ENCODE measurements at regions of chr17 and their contacts with region 1.

Region 1: GRCh38 chr17:3845621-3846441 is at the start of gene NCBP3:
- DNase-seq: peak; percentile 96
- ATAC-seq: peak; percentile 97
- H3K4me3 ChIP-seq: peak within 1 kb of the TSS; percentile 54 to 96 (median 90)
- H3K4me3 Mint-ChIP-seq: peak within 1 kb of the TSS; percentile 92
- H3K27ac ChIP-seq: peak within 1 kb of the TSS; percentile 72 to 94
- H3K27ac Mint-ChIP-seq: peak within 1 kb of the TSS; percentile 86
- H3K4me1 ChIP-seq: peaks cover 10 to 20% of the 10 kb centered on the region in 2 donors
- H3K4me1 Mint-ChIP-seq: peaks cover 23% of the 10 kb centered on the region
- H3K27me3 ChIP-seq: no peaks in the 10 kb centered on the region
- H3K27me3 Mint-ChIP-seq: no peaks in the 10 kb centered on the region
- CTCF ChIP-seq: peak; percentile 90
- total RNA-seq, gene NCBP3: 70.7 and 71.7 TPM in 2 replicates

Region 2: GRCh38 chr17:3602499-3602898 is 243.3 kb before region 1 on chr17:
- CTCF ChIA-PET with region 1: interaction called, 10 read pairs
- POLR2A ChIA-PET with region 1: no interaction called
- intact Hi-C with region 1: no loop called
- DNase-seq: peak; percentile 58
- ATAC-seq: peak; percentile 60
- H3K4me3 ChIP-seq: no peak overlapping the region
- H3K4me3 Mint-ChIP-seq: no peak overlapping the region
- H3K27ac ChIP-seq: no peak overlapping the region
- H3K27ac Mint-ChIP-seq: no peak overlapping the region
- H3K4me1 ChIP-seq: no peaks in the 10 kb centered on the region
- H3K4me1 Mint-ChIP-seq: peaks cover 2% of the 10 kb centered on the region
- H3K27me3 ChIP-seq: no peaks in the 10 kb centered on the region
- H3K27me3 Mint-ChIP-seq: no peaks in the 10 kb centered on the region
- CTCF ChIP-seq: peak; percentile 43

Region 3: DNA sequence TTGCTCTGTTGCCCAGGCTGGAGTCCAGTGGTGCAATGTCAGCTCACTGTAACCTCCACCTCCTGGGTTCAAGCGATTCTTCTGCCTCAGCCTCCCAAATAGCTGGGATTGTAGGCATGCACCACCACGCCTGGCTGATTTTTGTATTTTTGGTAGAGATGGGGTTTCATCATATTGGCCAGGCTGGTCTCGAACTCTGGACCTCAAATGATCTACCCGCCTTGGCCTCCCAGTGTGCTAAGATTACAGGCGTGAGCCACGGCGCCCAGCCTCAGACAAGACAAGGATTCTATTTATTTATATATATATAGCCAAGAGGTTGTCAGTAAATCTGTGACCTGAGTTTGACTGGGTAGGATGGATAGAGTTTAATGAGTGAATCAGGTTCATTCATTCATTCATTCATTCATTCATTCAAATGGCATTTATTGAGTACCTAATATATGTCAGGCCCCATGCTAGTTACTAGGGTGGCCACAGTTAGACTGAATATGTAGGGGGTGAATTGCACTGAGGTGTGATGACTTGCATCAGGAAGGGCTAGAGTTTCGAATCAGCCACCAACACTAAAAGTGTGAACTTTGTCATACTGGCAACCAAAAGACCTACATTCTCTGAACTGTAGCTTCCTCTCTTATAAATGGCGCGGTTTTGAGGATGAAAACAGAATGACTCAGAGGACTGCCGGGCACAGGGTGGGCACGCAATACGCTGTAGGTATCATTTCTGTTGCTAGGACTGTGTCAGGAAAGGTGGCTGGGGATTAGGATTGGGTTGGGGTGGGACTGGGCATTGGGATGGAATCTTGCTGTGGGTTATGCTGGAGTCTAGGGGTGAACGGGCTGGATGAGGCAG is 82.7 kb before region 1 on chr17:
- CTCF ChIA-PET with region 1: interaction called, 13 read pairs
- POLR2A ChIA-PET with region 1: no interaction called
- intact Hi-C with region 1: no loop called
- DNase-seq: no peak
- ATAC-seq: peak; percentile 43
- H3K4me3 ChIP-seq: no peak overlapping the region
- H3K4me3 Mint-ChIP-seq: peak overlapping the region; percentile 59
- H3K27ac ChIP-seq: no peak overlapping the region
- H3K27ac Mint-ChIP-seq: peak overlapping the region; percentile 88
- H3K4me1 ChIP-seq: peaks cover 10 to 22% of the 10 kb centered on the region in 2 donors
- H3K4me1 Mint-ChIP-seq: peaks cover 20% of the 10 kb centered on the region
- H3K27me3 ChIP-seq: no peaks in the 10 kb centered on the region
- H3K27me3 Mint-ChIP-seq: no peaks in the 10 kb centered on the region
- CTCF ChIP-seq: no peak

Region 4: GRCh38 chr17:3865176-3865575 is 19.3 kb after region 1 on chr17:
- CTCF ChIA-PET with region 1: interaction called, 29 read pairs
- POLR2A ChIA-PET with region 1: interaction called, 3 read pairs
- intact Hi-C with region 1: no loop called
- DNase-seq: no peak
- ATAC-seq: no peak
- H3K4me3 ChIP-seq: no peak overlapping the region
- H3K4me3 Mint-ChIP-seq: no peak overlapping the region
- H3K27ac ChIP-seq: no peak overlapping the region
- H3K27ac Mint-ChIP-seq: no peak overlapping the region
- H3K4me1 ChIP-seq: no peaks in the 10 kb centered on the region
- H3K4me1 Mint-ChIP-seq: no peaks in the 10 kb centered on the region
- H3K27me3 ChIP-seq: no peaks in the 10 kb centered on the region
- H3K27me3 Mint-ChIP-seq: no peaks in the 10 kb centered on the region
- CTCF ChIP-seq: no peak

Region 5: DNA sequence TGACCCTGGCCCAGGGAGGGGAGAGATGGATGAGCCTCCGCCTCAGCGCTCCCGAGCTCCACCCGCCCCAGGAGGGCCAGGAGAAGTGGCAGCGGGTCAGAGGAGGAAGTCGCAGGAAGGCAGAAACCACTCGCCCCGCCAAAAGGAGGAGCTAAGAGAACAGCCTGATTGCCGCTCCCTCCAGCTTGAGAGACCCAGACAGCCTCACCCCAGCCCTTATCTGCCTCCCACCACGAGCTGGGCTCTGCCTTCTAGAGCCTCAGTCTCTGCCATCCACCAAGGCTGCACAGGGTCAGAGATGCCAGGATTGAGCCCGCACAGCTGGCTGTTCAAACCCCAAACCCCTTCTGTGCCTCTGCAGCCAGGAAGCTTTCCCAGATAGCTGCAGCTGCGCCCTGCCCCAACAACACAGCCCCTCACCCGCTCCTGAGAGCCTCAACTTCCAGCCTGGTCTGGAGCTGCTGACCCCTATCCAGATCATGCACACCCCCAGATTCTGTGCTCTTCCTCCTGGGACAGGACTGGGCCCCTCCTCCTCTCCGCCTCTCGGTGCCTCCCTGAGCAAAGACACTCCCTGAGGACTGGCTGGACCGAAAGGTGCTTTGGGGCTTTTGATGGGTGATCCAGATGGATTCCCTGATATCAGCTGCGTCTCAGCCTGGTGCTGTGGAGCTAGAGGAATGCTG is 119.4 kb after region 1 on chr17:
- CTCF ChIA-PET with region 1: interaction called, 10 read pairs
- POLR2A ChIA-PET with region 1: interaction called, 9 read pairs
- intact Hi-C with region 1: loop called (anchors 1 kb)
- DNase-seq: peak; percentile 85
- ATAC-seq: peak; percentile 35
- H3K4me3 ChIP-seq: peak overlapping the region; percentile 13 to 98 (median 86)
- H3K4me3 Mint-ChIP-seq: peak overlapping the region; percentile 94
- H3K27ac ChIP-seq: peak overlapping the region; percentile 83 to 88
- H3K27ac Mint-ChIP-seq: peak overlapping the region; percentile 94
- H3K4me1 ChIP-seq: peaks cover 61 to 77% of the 10 kb centered on the region in 2 donors
- H3K4me1 Mint-ChIP-seq: peaks cover 62% of the 10 kb centered on the region
- H3K27me3 ChIP-seq: no peaks in the 10 kb centered on the region
- H3K27me3 Mint-ChIP-seq: no peaks in the 10 kb centered on the region
- CTCF ChIP-seq: no peak

Region 6: DNA sequence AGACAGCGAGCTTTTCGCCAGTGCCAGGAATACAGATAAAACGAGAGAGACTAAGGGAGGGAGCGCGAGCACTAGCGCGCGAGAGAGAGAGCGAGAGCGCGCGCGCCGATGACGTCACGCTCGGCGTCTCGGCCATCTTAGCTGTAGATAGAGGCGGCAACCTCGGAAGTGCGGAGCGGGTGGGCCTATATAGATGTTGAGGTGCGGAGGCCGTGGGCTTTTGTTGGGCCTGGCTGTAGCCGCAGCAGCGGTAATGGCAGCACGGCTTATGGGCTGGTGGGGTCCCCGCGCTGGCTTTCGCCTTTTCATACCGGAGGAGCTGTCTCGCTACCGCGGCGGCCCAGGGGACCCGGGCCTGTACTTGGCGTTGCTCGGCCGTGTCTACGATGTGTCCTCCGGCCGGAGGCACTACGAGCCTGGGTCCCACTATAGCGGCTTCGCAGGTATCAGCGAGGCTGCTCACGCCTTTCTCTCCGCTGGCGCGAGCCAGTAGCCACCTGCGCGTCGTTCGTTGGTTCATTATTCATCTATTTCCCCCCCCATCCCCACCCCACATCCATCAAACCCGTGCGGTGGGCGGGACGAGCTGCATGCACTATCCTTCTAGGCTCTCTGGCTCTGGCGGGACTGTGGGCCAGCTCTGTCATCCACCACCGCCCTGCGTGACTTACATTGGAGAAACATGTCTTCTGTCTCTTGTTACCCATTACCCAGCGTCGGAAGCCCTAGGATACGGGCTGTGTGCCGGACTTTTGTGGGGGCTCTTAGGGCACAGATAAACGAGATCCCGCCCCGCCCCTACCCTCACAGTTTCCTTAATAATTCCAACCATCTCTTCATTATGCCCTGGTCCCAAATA is 298.0 kb after region 1 on chr17:
- CTCF ChIA-PET with region 1: no interaction called
- POLR2A ChIA-PET with region 1: no interaction called
- intact Hi-C with region 1: loop called (anchors 5 kb)
- DNase-seq: peak; percentile 97
- ATAC-seq: peak; percentile 69
- H3K4me3 ChIP-seq: peak overlapping the region; percentile 65 to 95 (median 93)
- H3K4me3 Mint-ChIP-seq: peak overlapping the region; percentile 94
- H3K27ac ChIP-seq: peak overlapping the region; percentile 98 to 99
- H3K27ac Mint-ChIP-seq: peak overlapping the region; percentile 100
- H3K4me1 ChIP-seq: peaks cover 22 to 26% of the 10 kb centered on the region in 2 donors
- H3K4me1 Mint-ChIP-seq: peaks cover 39% of the 10 kb centered on the region
- H3K27me3 ChIP-seq: no peaks in the 10 kb centered on the region
- H3K27me3 Mint-ChIP-seq: no peaks in the 10 kb centered on the region
- CTCF ChIP-seq: no peak

Measured in B cell (primary cell).